Activated CD8-positive, alpha-beta T cell treated with anti-CD3 and anti-CD28 coated beads for 36 hours (primary cell): ENCODE measurements at regions of chr4 and their contacts with region 1.

Region 1: GRCh38 chr4:77075869-77076799 is at the start of gene CCNI:
- DNase-seq: peak; percentile 92
- ATAC-seq: peak; percentile 77
- H3K4me3 Mint-ChIP-seq: no peak within 1 kb of the TSS
- H3K27ac Mint-ChIP-seq: peak within 1 kb of the TSS; percentile 100
- H3K4me1 Mint-ChIP-seq: peaks cover 36% of the 10 kb centered on the region
- H3K27me3 Mint-ChIP-seq: no peaks in the 10 kb centered on the region
- CTCF ChIP-seq: no peak
- total RNA-seq, gene CCNI: 257 to 272 TPM

Region 2: DNA sequence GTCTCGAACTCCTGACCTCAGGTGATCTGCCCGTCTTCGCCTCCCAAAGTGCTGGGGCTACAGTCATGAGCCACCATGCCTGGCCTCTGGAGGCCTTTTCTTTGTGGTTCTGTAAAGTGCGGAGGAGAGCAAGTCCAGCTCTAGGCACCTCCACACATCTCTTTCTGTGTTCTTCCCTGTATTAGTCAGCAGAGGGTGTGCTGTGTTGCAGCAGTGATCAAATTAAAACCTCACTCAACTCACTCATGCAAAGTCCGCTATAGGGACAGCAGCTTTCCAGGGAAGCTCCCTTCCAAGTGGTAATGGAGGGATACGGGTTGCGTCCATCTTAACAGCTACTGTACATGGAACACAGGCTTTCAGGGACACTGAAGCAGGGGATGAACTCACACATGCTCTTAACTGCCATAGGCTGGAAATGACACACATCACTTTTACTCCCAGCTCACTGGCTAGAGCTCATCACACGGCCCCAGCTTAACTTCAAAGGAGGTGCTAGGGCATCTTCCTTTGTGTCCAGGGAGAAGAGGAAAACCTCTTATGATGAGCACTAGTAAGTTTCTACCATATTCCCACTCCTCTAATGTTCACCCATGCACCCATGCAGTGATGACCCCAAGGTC is 44.9 kb after region 1 on chr4:
- CTCF ChIA-PET with region 1: no interaction called
- POLR2A ChIA-PET with region 1: no interaction called
- intact Hi-C with region 1: no loop called
- DNase-seq: no peak
- ATAC-seq: no peak
- H3K4me3 Mint-ChIP-seq: no peak overlapping the region
- H3K27ac Mint-ChIP-seq: no peak overlapping the region
- H3K4me1 Mint-ChIP-seq: no peaks in the 10 kb centered on the region
- H3K27me3 Mint-ChIP-seq: no peaks in the 10 kb centered on the region
- CTCF ChIP-seq: no peak

Region 3: GRCh38 chr4:77156533-77156911 is 80.4 kb after region 1 on chr4:
- CTCF ChIA-PET with region 1: interaction called, 6 read pairs
- POLR2A ChIA-PET with region 1: interaction called, 8 read pairs
- intact Hi-C with region 1: loop called (anchors 2 kb)
- DNase-seq: peak; percentile 97
- ATAC-seq: peak; percentile 92
- H3K4me3 Mint-ChIP-seq: peak overlapping the region; percentile 93
- H3K27ac Mint-ChIP-seq: peak overlapping the region; percentile 97
- H3K4me1 Mint-ChIP-seq: peaks cover 33% of the 10 kb centered on the region
- H3K27me3 Mint-ChIP-seq: no peaks in the 10 kb centered on the region
- CTCF ChIP-seq: no peak

Region 4: DNA sequence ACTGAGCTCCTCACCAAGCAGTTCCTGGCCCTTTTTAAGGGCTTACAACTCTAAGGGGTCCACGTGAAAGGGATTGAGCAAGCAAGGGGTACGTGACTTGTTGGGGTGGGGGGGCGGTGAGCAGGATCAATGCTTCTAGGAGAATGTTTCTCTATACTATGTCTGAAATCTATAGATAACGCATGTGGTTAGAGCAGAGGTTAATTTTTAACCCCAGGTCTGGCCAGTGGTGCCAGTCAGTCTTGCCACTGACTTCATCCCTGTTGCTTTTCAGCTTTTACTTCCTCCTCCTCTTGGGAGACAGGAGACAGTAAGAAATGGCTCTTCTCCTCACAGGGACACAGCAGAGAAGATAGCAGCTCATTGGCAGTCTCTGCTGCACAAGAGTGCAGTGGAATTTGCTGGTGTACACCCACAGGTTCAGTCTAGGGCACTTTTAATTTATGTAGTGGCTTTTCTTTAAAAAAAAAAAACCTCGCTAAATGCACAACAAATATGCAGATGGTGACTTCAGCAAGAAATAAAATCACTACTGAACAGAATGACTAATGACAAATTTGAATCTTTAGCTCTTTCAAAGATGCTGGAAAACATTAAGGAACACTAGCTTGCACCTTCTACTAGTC is 271.3 kb after region 1 on chr4:
- CTCF ChIA-PET with region 1: no interaction called
- POLR2A ChIA-PET with region 1: no interaction called
- intact Hi-C with region 1: no loop called
- DNase-seq: no peak
- ATAC-seq: no peak
- H3K4me3 Mint-ChIP-seq: no peak overlapping the region
- H3K27ac Mint-ChIP-seq: no peak overlapping the region
- H3K4me1 Mint-ChIP-seq: no peaks in the 10 kb centered on the region
- H3K27me3 Mint-ChIP-seq: peaks cover 3% of the 10 kb centered on the region
- CTCF ChIP-seq: no peak